ENCODE measurements at regions of chr15 and their contacts with region 1.

Region 1: DNA sequence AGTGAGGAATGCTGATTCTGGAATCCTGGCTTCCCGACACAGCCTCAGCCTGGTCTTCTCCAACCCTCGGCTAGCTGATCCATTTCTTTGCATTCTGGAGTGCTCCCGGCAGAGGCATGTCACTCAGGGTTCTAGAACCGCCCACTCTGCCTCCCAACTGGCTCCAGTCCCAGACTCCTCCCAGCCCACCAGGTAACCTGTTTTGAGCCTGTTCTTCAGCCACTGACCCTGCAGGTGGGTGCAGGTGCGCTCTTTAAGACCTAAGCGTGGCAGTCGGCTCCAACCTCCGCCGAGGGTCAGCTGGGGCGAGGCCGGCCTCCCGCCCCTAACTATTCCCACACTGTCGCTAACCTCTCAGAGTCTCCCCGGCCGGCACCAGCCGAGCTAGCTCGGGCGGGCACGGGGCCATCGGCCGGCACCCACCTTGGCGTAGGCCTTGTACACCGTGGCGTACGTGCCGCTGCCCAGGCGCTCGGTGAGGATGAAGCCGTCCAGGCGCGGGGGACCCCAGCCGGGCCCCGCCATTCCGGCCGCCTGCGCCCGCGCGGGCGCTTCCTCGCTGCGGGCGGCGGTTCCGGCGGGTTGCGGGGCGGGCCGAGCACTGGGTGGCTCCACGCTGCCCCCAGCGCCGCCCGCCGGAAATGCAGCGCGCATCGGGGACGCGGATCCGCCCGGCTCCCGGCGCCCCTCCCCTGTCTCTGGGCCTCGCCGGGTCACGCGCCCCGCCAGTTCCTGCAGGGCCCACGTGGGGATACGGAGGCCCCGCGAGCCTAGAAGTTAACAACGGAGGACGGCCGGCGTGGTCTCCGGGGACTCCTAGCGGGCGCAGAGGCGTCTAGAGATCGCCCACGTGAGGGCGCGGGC is at the start of gene ULK3:
- DNase-seq: peak; percentile 91
- H3K4me3 Mint-ChIP-seq: peak within 1 kb of the TSS; percentile 92
- H3K27ac Mint-ChIP-seq: peak within 1 kb of the TSS; percentile 98
- H3K4me1 Mint-ChIP-seq: peaks cover 52% of the 10 kb centered on the region
- H3K27me3 Mint-ChIP-seq: no peaks in the 10 kb centered on the region
- total RNA-seq, gene ULK3: 52.1 and 52.4 TPM in 2 replicates

Region 2: GRCh38 chr15:74156678-74157411 is 686.0 kb before region 1 on chr15:
- intact Hi-C with region 1: no loop called
- DNase-seq: no peak
- H3K4me3 Mint-ChIP-seq: no peak overlapping the region
- H3K27ac Mint-ChIP-seq: no peak overlapping the region
- H3K4me1 Mint-ChIP-seq: peaks cover 37% of the 10 kb centered on the region
- H3K27me3 Mint-ChIP-seq: peaks cover 27% of the 10 kb centered on the region

Region 3: DNA sequence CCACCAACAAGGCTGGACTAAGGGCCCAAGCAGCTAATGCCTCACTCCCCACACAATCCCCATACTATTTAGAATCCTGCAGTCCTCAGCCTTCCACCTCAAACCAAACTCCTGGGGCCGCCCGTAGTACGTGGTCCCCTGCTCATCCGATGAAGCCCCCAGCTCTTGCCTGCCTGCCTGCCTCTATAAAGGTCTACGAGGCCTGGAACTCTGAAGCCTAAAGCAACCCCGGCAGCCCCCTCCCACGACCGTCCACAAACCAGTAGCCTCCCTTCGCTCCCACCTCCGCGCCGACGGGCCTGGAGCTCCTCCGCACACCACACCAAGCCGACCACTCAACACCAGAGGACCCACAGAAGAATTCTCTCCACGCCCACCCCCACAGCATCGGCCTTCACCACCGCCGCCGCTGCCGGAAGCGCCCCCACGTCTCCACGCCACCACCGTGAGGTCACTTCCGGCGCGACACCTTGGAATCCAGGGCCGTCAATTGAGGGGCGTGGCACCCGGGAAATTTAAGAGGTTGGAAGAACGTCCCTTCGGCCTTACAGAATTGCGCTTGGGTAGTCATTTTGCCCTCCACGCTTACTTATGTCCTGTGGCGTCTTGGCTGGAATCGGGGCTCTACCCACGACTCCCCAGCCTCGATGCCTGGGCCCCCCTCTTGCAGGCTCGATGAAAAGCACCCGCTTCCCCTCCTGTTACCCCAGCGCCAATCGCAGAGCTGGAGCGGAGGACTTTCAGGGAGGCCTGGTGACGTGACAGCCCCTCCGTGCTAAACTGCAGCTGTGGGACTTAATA is 147.0 kb before region 1 on chr15 and contains the start of gene EDC3:
- intact Hi-C with region 1: loop called (anchors 5 kb)
- DNase-seq: peak; percentile 80
- H3K4me3 Mint-ChIP-seq: peak within 1 kb of the TSS; percentile 100
- H3K27ac Mint-ChIP-seq: peak within 1 kb of the TSS; percentile 100
- H3K4me1 Mint-ChIP-seq: peaks cover 40% of the 10 kb centered on the region
- H3K27me3 Mint-ChIP-seq: peaks cover 2% of the 10 kb centered on the region
- total RNA-seq, gene EDC3: 58.4 and 61.4 TPM in 2 replicates

Region 4: DNA sequence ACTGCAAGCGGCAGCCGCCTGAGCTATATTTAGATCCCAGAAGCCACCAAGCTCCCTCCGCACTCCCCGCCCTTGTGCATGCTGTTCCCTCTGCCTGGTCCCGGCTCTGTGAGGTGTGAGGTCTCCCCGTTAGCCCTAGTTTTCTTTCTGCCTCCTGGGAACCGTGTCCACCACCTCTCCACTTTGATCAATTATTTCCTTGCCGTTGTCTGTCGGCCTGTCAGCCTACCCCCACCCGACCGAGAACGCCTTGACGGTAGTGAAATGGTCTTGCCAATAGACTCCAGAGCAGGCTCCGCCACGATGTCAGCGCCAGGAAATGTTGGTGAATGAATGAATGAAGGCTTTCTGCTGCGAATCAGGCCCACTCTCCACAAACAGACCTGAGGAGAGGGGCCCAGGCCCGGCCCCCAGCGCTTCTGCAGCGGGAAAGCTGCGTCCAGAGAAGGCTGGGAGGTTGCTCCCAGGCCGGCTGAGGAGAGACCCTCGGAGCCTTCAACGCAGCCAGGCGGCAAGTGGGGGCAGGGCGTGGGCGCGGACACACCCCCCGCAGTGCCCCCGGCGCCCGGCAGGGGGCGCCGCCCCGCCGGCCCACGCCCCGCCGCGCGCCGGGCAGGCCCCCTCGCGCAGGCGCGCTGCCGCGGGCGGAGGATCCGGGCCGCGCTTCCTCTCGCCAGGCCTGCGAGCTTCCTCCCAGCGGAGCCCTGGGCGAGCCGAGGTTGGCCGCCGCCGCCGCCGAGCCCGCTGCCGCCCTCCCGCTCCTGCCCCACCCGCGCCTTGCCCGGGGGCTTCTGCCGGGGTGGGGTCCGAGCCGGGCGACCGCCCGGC is 61.2 kb before region 1 on chr15 and contains the start of gene CSK:
- intact Hi-C with region 1: loop called (anchors 2 kb)
- DNase-seq: peak; percentile 78
- H3K4me3 Mint-ChIP-seq: peak within 1 kb of the TSS; percentile 96
- H3K27ac Mint-ChIP-seq: peak within 1 kb of the TSS; percentile 100
- H3K4me1 Mint-ChIP-seq: peaks cover 62% of the 10 kb centered on the region
- H3K27me3 Mint-ChIP-seq: no peaks in the 10 kb centered on the region
- total RNA-seq, gene CSK: 348 and 362 TPM in 2 replicates

Region 5: GRCh38 chr15:74793135-74794028 is 49.4 kb before region 1 on chr15:
- intact Hi-C with region 1: no loop called
- DNase-seq: no peak
- H3K4me3 Mint-ChIP-seq: peak overlapping the region; percentile 42
- H3K27ac Mint-ChIP-seq: peak overlapping the region; percentile 74
- H3K4me1 Mint-ChIP-seq: peaks cover 75% of the 10 kb centered on the region
- H3K27me3 Mint-ChIP-seq: no peaks in the 10 kb centered on the region

Region 6: DNA sequence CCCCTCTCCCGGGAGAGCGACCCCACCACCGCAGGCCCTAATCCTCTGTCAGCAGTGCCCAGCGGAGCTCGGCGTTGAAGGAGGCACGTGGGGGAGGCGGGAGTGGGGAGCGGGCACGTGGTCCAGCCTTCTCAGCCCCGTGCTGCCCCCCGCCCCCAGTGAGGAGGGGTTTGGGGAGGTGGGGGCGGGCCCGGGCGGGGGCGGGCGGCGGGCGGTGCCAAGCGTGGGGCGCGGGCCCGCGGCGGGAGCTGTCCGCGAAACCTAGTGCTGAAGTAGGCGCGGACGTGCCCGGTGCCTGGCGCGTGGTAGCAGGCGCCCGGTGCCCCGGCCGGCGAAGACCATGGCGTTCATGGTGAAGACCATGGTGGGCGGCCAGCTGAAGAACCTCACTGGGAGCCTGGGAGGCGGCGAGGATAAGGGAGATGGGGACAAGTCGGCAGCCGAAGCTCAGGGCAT is 16.4 kb before region 1 on chr15 and contains the start of gene CPLX3:
- intact Hi-C with region 1: loop called (anchors 1 kb)
- DNase-seq: peak; percentile 51
- H3K4me3 Mint-ChIP-seq: no peak within 1 kb of the TSS
- H3K27ac Mint-ChIP-seq: no peak within 1 kb of the TSS
- H3K4me1 Mint-ChIP-seq: no peaks in the 10 kb centered on the region
- H3K27me3 Mint-ChIP-seq: peaks cover 14% of the 10 kb centered on the region
- total RNA-seq, gene CPLX3: 0.17 and 0.29 TPM in 2 replicates

Region 7: DNA sequence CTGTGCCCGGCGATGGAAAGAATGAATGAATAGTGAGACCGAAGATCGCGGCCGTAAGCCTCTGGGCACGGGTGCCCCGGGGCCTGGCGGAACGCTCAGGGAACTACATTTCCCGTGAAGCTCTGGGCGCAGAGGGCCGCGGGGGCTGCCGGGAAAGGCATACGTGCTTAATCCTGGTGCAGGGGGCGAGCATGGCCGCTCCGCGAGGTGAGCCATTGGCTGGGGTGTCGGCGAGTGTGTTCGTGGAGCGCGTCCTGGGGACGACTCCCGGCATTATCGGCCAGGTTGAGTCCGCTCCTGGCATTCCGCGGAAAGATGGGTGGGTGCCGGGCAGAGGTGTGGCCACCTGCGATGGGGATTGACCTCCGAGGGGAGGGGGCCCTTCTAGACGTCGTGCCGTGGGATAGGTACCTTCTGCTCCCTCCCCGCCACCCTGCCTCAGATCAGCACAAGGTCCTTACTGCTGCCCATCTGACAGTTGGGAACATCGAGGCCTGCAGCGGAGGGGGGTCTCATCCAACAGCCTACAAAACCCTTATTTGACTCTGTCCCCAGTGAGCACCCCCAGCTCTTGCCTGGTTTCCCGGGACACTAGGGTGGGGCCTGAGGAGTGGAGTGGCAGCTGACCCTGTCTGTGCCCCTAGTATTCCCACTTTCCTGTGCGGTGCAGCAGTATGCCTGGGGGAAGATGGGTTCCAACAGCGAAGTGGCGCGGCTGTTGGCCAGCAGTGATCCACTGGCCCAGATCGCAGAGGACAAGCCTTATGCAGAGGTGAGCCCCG is 47.3 kb after region 1 on chr15 and contains the start of gene MPI:
- intact Hi-C with region 1: loop called (anchors 1 kb)
- DNase-seq: peak; percentile 82
- H3K4me3 Mint-ChIP-seq: peak within 1 kb of the TSS; percentile 91
- H3K27ac Mint-ChIP-seq: peak within 1 kb of the TSS; percentile 92
- H3K4me1 Mint-ChIP-seq: peaks cover 47% of the 10 kb centered on the region
- H3K27me3 Mint-ChIP-seq: no peaks in the 10 kb centered on the region
- total RNA-seq, gene MPI: 57.7 and 62.8 TPM in 2 replicates

Region 8: DNA sequence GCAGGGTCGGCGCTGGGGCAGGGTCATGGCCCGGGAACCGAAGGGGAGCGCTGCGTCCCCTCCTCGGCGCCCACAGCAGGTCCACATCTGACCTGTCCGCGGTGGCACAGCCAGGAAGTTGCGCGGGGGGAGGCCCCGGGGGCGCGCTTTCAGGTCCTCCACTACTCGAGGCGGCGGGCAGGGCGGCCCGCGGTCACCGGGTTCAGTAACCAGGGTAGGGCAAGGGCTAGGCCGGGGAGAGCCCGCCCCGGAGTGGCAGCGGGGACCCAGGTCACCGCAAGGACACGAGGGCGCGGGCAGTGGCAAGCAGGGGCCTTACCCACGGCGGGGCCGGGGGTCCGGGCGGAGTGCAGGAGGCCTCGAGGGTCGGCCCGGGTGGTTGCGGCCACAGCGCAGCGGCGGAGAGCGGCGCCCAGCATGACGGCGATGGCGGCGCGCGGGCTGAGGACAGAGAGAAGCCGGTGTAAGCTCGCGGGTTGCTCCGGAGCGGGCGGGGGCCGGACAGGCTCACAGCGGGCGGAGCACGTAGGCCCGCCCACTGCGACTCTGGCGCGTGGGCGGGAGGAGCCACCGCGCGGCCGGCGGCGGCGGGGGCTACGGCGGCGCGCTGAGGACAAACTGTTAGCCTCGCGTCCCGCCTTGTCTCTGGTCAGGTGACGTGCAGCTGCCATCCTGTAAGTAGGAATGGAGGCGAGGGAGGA is 94.9 kb after region 1 on chr15 and contains the start of gene COX5A:
- intact Hi-C with region 1: loop called (anchors 1 kb)
- DNase-seq: peak; percentile 91
- H3K4me3 Mint-ChIP-seq: peak within 1 kb of the TSS; percentile 91
- H3K27ac Mint-ChIP-seq: peak within 1 kb of the TSS; percentile 91
- H3K4me1 Mint-ChIP-seq: peaks cover 22% of the 10 kb centered on the region
- H3K27me3 Mint-ChIP-seq: no peaks in the 10 kb centered on the region
- total RNA-seq, gene COX5A: 273 and 290 TPM in 2 replicates

Region 9: DNA sequence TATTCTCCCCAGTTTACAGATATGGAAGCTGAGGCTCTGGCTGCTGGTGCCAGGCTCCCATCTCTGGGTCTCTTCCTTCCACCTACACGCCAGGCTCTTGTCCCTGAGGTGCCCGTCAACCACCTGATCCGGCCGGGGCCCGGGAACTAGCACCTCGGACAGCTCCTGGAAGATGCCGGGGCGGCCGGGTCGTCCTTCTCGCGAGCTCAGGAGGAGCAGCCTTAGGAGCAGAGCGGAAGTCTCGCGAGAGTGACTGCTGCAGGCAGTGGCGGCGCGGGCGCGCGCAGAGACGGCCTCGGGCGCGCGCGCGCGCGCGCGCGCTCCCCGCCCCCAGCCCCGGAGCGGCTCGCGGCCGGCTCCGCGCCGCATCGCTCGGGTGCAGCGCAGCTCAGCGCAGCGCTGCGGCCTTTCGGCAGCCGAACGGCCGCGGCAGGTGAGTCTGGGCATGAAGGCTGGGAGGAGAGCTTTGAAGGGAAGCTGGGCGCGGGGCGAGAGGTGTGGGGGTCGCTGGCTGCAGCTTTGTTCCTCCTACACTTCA is 152.5 kb after region 1 on chr15 and contains the start of gene SCAMP5:
- intact Hi-C with region 1: no loop called
- DNase-seq: peak; percentile 92
- H3K4me3 Mint-ChIP-seq: peak within 1 kb of the TSS; percentile 70
- H3K27ac Mint-ChIP-seq: no peak within 1 kb of the TSS
- H3K4me1 Mint-ChIP-seq: peaks cover 4% of the 10 kb centered on the region
- H3K27me3 Mint-ChIP-seq: peaks cover 33% of the 10 kb centered on the region
- total RNA-seq, gene SCAMP5: 2.0 and 3.5 TPM in 2 replicates